SK-N-SH (cell line): ENCODE measurements at regions of chr1 and their contacts with region 1.

Region 1: DNA sequence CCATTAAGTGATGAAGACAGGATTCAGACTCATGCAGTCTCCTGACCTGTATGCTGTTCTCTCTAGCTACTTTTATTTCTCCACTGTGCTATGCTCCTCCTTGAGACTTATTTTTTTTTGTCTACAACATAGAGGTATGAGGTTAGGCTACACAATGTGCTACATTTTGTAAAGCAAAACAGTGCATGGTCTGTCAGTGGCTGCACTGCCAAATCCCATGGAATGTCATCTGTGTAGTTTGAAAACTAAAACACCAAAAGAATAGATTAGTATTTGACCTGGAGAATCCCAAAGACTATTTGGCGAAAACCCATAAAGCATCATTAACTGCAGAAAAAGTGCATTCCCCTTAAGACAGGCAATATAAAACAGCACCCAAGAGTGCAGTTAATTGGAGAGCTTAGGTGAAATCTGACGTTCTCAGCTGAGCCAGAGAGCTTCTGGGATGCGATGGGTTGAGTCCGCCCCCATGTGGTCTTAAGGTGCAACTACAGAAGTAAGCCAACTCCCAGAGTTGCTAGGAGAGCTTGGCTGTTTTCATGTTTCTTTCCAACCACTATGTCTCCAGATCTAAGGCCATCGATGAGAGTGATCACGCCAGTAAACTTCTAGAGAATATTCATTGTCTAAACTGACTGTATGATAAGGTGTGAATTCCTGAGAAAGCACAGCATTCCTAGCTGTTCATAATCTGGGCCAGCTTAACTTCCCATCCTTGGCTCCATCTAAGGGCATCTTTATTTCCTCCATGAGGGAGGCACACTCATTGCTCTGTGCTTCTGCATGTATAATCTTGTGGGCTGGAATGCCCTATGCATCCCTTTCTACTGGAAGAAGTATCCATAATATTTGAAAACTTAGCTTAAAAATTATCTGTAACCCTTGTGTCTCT is 20.7 kb upstream of the CYP2J2 start:
- DNase-seq: peak; percentile 60
- H3K4me3 ChIP-seq: peak overlapping the region in 1 of 2 experiments; percentile 45; a peak in 1 of 4 replicates
- H3K27ac ChIP-seq: no peak overlapping the region
- H3K4me1 ChIP-seq: peaks cover 4 to 6% of the 10 kb centered on the region in 2 experiments; a peak in 2 of 4 replicates
- H3K27me3 ChIP-seq: peaks cover 4% of the 10 kb centered on the region; the same call in 1 of the 2 replicates
- CTCF ChIP-seq: peak; percentile 92
- EP300 ChIP-seq: no peak
- RAD21 ChIP-seq: peak; percentile 92

Region 2: DNA sequence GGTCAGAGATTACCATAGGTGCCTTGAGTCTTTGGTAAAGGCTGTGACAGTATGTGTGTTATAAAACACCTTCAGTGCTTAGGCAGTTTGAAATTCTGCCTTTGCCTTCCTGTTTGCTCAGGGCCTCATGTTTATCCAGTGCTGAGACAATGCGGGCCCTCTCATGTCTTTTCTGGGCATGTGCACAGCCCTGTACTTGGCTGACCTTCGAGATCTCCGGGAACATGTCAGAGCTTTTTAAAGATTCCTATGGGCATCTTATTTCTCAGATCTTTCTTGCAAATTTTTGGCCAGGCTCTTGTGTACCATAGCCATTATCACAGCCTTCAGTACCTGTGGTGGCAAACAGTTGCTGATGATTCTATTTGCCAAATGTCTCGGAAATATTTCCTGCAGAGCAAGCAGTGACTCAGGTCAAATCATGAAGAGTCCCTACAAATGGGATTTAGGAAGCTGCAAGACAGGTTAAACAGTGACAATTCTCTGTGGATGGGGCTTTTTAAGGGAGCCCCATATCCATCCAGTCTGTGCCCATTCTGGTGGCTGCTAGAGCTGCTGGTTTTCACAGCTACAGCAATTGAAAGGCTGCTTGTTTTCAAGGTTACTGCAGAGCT is 90.5 kb before region 1 on chr1:
- CTCF ChIA-PET with region 1: interaction called, 11 read pairs
- POLR2A ChIA-PET with region 1: no interaction called
- DNase-seq: no peak
- H3K4me3 ChIP-seq: no peak overlapping the region
- H3K27ac ChIP-seq: no peak overlapping the region
- H3K4me1 ChIP-seq: no peaks in the 10 kb centered on the region
- H3K27me3 ChIP-seq: no peaks in the 10 kb centered on the region
- CTCF ChIP-seq: no peak
- EP300 ChIP-seq: no peak
- RAD21 ChIP-seq: no peak

Region 3: GRCh38 chr1:59885160-59885832 is 62.0 kb before region 1 on chr1:
- CTCF ChIA-PET with region 1: interaction called, 50 read pairs
- POLR2A ChIA-PET with region 1: no interaction called
- DNase-seq: no peak
- H3K4me3 ChIP-seq: no peak overlapping the region
- H3K27ac ChIP-seq: no peak overlapping the region
- H3K4me1 ChIP-seq: no peaks in the 10 kb centered on the region; a peak in 1 of 4 replicates
- H3K27me3 ChIP-seq: no peaks in the 10 kb centered on the region
- CTCF ChIP-seq: no peak
- EP300 ChIP-seq: no peak
- RAD21 ChIP-seq: no peak

Region 4: GRCh38 chr1:59903141-59903754 is 44.0 kb before region 1 on chr1:
- CTCF ChIA-PET with region 1: interaction called, 193 read pairs
- POLR2A ChIA-PET with region 1: interaction called, 3 read pairs
- DNase-seq: peak; percentile 61
- H3K4me3 ChIP-seq: no peak overlapping the region
- H3K27ac ChIP-seq: no peak overlapping the region
- H3K4me1 ChIP-seq: no peaks in the 10 kb centered on the region
- H3K27me3 ChIP-seq: no peaks in the 10 kb centered on the region
- CTCF ChIP-seq: peak; percentile 61
- EP300 ChIP-seq: no peak
- RAD21 ChIP-seq: peak; percentile 70

Region 5: GRCh38 chr1:59926381-59927123 is 20.7 kb before region 1 on chr1 and contains the start of gene CYP2J2:
- CTCF ChIA-PET with region 1: interaction called, 60 read pairs
- POLR2A ChIA-PET with region 1: no interaction called
- DNase-seq: peak; percentile 82
- H3K4me3 ChIP-seq: peak within 1 kb of the TSS; percentile 66 to 75
- H3K27ac ChIP-seq: peak within 1 kb of the TSS in 1 of 2 experiments; percentile 56; a peak in 1 of 4 replicates
- H3K4me1 ChIP-seq: peaks cover 0 to 2% of the 10 kb centered on the region in 2 experiments; a peak in 1 of 4 replicates
- H3K27me3 ChIP-seq: 0 out of 2 replicates have a peak, but pooled peaks cover 6% of the 10 kb centered on the region
- CTCF ChIP-seq: no peak
- EP300 ChIP-seq: no peak
- RAD21 ChIP-seq: no peak
- polyA plus RNA-seq, gene CYP2J2: 1.1 and 1.2 TPM in 2 replicates

Region 6: DNA sequence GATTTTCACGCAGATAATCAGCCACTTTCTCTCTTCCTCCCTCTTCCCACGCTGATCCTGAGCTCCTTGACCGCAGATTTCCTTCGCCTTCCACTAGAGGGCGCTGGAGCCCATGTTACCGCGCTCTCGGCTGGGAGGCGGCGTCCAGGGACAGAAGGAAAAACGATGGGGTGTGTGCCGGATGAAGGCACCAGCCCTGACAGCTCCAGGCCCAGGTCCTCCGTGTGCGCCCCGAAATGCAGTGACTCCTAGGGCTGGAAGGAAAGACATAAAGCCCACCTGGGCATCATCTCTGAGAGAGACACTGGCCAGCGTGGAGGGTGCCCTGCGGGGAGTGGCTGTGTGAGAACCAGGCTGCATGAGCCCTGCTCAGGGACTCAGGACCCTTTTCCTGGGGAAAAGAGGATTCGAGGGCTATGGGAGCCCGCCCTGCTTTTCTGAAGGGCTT is 24.2 kb after region 1 on chr1:
- CTCF ChIA-PET with region 1: interaction called, 29 read pairs
- POLR2A ChIA-PET with region 1: no interaction called
- DNase-seq: peak; percentile 88
- H3K4me3 ChIP-seq: peak overlapping the region; percentile 13 to 42; a peak in 3 of 4 replicates
- H3K27ac ChIP-seq: no peak overlapping the region
- H3K4me1 ChIP-seq: peaks cover 0 to 5% of the 10 kb centered on the region in 2 experiments; a peak in 1 of 4 replicates
- H3K27me3 ChIP-seq: no peaks in the 10 kb centered on the region
- CTCF ChIP-seq: peak; percentile 96
- EP300 ChIP-seq: no peak
- RAD21 ChIP-seq: peak; percentile 93